Body of pancreas (tissue), 4 donors: ENCODE measurements at regions of chr19 and their contacts with region 1.

Region 1: GRCh38 chr19:5048091-5048726 is 79.3 kb downstream of the KDM4B start:
- DNase-seq: peak; percentile 80 to 87 (median 84)
- ATAC-seq: peak; percentile 78
- H3K4me3 ChIP-seq: no peak overlapping the region
- H3K27ac ChIP-seq: peak overlapping the region in 2 of 4 donors; percentile 27 to 77
- H3K4me1 ChIP-seq: peaks cover 37% of the 10 kb centered on the region
- H3K27me3 ChIP-seq: no peaks in the 10 kb centered on the region
- CTCF ChIP-seq: peak; percentile 97 to 100 (median 99)
- POLR2A ChIP-seq: no peak

Region 2: DNA sequence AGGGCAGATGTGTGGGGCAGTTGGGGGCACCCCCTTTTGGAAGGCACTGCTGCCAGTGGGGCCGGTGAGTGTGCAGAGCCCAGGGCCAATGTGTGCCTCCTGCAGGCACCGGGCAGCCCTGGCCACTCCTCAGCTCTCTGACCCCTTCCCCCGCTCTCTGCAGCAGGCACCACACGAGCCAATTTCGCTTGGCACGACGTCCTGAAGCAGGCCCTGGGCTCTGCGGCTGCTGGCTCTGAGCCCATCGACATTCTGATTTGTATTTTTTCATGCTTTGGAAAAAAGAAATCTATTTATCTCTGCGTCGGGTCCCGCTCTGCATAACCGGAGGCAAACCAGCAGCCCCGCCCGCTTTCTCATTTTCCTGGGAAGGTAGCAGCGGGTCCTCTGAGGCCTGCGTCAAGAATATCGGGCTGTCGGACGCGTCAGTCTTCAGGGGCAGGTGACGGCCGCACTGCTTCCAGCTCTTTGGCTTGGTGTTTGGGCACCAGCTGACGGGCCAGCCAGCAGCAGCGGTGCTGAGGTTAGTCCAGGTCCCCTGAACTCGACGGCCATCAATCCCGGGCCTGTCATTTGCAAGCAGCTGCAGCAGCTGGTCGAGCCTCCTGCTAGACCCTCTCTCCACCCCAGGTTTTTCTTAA is 55.0 kb after region 1 on chr19:
- intact Hi-C with region 1: no loop called
- DNase-seq: peak; percentile 93 to 95 (median 94)
- ATAC-seq: peak; percentile 75
- H3K4me3 ChIP-seq: no peak overlapping the region
- H3K27ac ChIP-seq: peak overlapping the region; percentile 82 to 95 (median 91)
- H3K4me1 ChIP-seq: peaks cover 65% of the 10 kb centered on the region
- H3K27me3 ChIP-seq: no peaks in the 10 kb centered on the region
- CTCF ChIP-seq: peak in 1 of 7 experiments; percentile 7
- POLR2A ChIP-seq: peak; percentile 21 to 58 (median 56)

Region 3: DNA sequence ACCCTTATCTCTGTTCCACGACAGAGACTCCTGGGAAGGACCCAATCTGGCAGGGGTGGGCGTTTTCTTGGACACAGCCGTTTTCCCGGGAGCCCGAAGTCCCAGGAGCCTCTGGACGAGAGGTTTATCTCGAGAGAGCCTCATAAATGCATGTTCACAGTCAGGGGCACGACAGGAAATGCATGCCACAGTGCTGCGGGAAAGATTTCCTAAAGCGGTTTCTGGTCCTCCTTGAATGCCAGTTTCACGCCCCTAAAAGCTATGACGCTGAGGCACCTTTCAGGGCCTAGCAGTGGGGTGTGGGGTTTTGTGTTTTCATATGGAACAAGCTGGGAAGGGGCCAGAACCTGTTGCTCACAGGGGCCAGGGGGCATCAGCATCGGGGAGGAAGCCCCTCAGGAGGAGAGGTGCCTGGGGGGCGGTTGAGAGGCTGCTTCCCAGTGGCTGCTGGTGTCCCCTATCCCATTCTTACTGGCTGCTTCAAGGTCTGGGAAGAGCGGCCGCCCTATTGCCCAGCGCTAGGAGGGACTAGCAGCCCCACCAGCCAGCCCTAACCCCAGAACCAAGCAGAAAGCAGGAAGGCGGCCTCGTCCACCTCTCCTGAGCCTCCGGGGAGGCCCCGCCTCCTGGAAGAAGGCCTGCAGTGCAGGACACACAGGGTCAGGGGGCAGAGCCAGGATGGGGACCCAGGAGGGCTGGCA is 77.7 kb after region 1 on chr19:
- intact Hi-C with region 1: no loop called
- DNase-seq: peak in 2 of 4 donors; percentile 28 to 59
- ATAC-seq: no peak
- H3K4me3 ChIP-seq: no peak overlapping the region
- H3K27ac ChIP-seq: peak overlapping the region; percentile 69 to 87 (median 84)
- H3K4me1 ChIP-seq: peaks cover 60% of the 10 kb centered on the region
- H3K27me3 ChIP-seq: no peaks in the 10 kb centered on the region
- CTCF ChIP-seq: no peak
- POLR2A ChIP-seq: no peak

Region 4: GRCh38 chr19:5154129-5154798 is 106.1 kb after region 1 on chr19:
- intact Hi-C with region 1: loop called (anchors 5 kb)
- DNase-seq: peak; percentile 38 to 62 (median 58)
- ATAC-seq: peak; percentile 36
- H3K4me3 ChIP-seq: no peak overlapping the region
- H3K27ac ChIP-seq: no peak overlapping the region
- H3K4me1 ChIP-seq: no peaks in the 10 kb centered on the region
- H3K27me3 ChIP-seq: no peaks in the 10 kb centered on the region
- CTCF ChIP-seq: peak; percentile 17 to 52 (median 39)
- POLR2A ChIP-seq: no peak

Region 5: DNA sequence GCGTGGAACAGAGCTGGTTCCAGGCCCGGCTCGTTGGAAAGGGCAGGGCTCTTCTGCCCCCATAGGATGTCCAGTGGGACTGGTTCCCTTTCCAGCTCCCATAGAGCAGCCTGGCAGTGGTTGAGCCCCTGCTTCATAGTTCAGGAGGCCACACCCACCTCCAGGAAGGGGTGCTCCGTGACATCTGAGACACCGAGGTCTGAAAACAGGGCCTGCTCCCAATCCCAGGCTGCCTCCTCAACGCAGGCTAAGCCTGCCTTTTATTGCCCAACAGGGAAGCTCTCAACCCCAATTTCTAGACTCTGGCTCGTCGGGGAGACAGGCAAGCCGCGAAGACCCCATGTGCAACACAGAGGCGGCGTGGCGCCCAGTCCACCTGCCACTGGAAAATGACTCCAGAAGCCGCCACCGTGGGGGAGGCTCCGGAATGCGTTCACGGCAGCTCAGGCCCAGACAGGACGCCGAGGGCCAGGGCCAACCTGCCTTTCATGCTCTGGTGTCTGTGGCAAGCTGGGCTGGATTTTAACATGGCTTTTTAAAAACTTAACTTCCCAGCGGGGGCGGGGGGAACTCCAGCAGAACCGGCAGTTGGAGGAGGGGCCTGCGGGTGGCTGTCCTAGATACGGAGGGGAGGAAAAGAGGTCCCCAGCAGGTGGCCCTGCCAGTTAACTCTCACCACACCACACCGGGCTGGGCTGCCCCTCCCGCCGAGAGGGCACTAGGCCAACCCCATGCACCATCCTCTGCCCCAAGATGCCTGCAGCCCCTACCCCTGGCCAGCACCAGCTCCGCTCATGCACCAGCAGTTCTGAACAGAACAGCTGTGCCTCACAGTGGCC is 537.5 kb after region 1 on chr19:
- intact Hi-C with region 1: loop called (anchors 10 kb)
- DNase-seq: peak in 3 of 4 donors; percentile 39 to 48 (median 45)
- ATAC-seq: peak; percentile 43
- H3K4me3 ChIP-seq: no peak overlapping the region
- H3K27ac ChIP-seq: peak overlapping the region in 3 of 4 donors; percentile 40 to 69 (median 66)
- H3K4me1 ChIP-seq: peaks cover 10% of the 10 kb centered on the region
- H3K27me3 ChIP-seq: no peaks in the 10 kb centered on the region
- CTCF ChIP-seq: no peak
- POLR2A ChIP-seq: no peak